ENCODE measurements at regions of chr11 and their contacts with region 1.

Region 1: DNA sequence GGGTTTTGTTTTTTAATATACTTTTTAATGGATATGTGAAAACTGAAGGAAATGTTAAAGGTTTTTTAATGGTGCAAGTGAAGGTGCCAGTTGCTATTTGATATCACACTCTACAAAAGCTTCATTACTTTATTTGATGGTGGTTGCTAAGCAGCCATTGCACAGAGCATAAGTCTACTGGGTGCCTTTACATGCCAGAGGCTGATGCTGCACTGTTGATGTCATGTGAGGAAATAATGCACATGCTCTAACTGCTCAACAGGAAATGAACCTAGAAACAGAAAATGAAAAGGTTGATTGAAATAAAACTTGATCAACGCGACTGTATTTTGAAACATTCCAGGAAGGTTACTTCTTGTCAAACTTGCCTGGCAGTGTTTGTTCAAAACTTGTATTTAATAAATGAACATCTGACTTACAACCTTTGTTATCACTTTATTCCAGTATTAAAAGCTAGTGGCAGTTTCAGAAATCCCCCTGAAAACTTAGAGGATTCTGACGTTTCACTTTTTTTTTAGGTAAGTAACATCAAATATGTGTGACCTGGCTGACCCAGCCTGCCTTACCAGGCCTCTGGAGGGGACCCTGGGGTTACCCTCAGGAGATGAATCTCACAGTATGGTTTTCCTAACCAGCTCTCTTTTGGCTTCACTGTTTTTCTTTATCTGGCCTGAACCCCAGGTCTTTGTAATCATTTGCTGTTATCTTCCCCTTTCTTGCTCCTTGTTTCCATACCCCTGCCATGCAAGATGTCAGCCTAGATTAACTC is 2.4 kb upstream of the ATP5MG start:
- DNase-seq: peak; percentile 17
- CTCF ChIP-seq: no peak

Region 2: DNA sequence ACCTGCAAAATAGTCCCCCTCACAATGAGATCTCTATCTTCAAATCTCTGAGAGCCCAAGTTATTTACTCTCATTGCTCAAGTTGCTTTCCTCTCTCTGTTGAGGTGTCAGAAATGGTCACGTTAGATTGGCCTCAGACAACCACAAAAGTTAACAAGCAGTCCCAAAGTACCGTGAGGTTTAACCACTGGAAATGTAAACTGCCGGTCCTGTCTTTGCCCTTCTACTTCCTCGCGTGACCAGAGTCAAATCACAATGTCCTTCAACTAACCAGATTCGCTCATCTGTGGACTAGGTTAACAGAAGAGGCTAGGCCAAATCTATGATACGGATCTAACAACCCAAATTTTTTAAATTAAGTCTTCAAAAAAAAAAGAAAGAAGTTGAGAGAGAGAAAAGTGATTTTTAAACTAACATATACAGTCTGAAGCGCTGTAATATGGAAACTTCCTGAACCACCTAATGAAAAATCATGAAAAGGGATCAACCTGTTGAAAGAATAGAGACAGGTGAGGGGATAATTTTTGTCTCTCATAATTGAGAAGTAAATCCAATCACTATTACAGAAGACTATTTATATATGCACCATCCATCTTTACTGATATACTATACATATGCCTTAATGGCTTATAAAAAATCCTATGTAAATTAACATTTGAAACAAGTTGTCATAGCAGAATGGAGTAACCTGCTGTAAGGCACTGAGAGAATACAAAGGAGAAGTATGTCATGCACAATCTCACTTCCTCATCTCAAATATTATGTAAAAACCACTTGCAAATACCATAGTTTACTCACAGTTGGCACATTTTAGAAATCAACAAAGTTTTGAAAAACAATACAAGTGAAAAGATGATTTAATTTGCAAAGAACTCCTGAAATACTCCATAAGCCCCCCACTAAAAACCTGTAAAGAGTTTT is 170.8 kb before region 1 on chr11:
- in situ Hi-C with region 1: no loop called
- DNase-seq: no peak
- CTCF ChIP-seq: no peak

Region 3: DNA sequence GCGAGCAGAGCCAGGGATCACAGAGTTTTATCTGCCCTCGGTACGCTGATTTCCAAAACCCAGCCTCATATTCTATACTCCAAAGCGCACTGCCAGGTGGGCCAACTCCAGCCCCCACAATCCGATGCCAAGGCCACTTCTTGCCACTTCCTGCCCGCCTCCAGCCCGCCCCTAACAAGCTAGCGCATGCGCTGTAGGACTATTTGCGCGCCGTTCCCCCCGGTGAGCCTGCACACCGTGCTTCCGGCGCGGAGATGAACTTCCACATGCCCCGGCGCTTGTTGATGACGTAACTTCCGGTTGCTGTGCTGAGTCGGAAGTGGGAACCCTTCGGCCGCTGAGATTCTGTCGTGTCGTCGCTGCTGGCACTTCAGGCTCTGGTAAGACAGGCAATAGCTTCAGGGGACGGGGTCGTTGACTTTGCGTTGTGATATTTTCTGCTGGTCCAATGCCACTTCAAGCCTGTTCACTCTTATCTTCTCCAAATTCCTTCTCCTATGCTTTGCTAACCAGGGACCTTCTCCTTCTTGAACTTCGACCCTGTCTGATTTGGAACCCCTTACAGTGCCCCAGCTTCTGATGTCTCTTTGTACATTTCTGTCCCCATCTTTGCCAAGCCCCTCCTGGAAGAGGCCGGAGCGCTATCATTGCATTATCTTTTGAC is 39.5 kb before region 1 on chr11 and contains the start of gene UBE4A:
- in situ Hi-C with region 1: no loop called
- DNase-seq: peak; percentile 85
- CTCF ChIP-seq: no peak

Region 4: DNA sequence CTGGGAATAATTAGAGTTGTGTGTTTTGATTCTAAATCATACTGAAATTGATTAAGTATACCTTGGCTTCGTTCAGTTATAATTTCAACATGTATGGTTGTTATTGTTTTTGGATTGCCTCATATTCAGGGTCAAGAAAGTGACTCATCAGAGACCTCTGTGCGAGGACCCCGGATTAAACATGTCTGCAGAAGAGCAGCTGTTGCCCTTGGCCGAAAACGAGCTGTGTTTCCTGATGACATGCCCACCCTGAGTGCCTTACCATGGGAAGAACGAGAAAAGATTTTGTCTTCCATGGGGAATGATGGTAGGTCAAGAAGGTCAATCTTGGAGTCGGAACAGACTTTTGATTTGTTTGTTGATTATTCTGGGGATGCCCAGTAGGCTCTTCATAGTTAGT is 77.7 kb after region 1 on chr11:
- in situ Hi-C with region 1: no loop called
- DNase-seq: no peak
- CTCF ChIP-seq: no peak

Region 5: GRCh38 chr11:118497831-118498230 is 98.9 kb after region 1 on chr11:
- in situ Hi-C with region 1: loop called (anchors 10 kb)
- DNase-seq: no peak
- CTCF ChIP-seq: no peak

Region 6: DNA sequence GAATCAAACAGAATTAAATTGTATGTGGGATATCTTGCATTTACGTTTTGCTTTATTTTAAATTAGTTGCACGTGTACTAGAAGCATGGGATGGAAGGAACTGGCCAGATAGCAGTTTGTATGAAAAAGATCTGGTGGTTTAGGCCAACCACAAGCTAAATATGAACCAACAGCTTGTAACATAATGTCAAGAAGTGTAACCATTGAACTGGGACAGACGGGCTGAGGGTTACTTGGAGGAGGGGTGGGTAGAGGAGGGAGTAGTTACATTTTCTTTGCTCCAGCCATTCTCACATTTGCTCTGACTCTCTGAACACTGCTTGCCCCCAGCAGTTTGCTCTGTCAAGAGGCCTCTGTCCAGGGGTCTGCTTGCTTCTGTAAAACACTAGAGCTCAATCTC is 453.0 kb after region 1 on chr11:
- in situ Hi-C with region 1: no loop called
- DNase-seq: peak; percentile 67
- CTCF ChIP-seq: no peak

Measured in GM13977 (cell line).